Activated B cell treated with CpG ODN at 0.5 μM for 24 hours (primary cell): ENCODE measurements at regions of chr6 and their contacts with region 1.

Region 1: DNA sequence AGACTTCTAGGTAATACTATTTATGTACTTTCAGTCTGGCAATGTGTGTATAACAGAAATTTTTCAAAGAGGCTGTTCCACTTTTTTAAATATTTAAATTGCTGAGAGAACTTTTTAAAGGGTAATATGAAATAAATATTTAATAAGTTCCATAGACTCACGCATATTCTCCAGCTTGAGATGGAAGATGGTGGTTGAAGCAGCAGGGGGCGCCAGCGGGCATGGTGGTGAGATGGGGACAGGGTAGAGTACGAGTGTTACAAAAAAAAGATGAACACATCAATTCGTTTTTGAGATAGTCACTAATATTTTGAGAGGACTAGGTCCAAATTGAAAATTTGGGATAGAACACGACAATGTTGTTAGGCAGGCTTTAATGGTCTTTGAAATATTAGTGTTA is 68.4 kb downstream of the RSPO3 start:
- DNase-seq: peak; percentile 17
- ATAC-seq: no peak
- H3K4me3 Mint-ChIP-seq: no peak overlapping the region
- H3K27ac Mint-ChIP-seq: no peak overlapping the region
- H3K4me1 Mint-ChIP-seq: no peaks in the 10 kb centered on the region
- H3K27me3 Mint-ChIP-seq: peaks cover 7% of the 10 kb centered on the region
- CTCF ChIP-seq: no peak

Region 2: GRCh38 chr6:127420556-127420955 is 233.7 kb after region 1 on chr6:
- CTCF ChIA-PET with region 1: no interaction called
- POLR2A ChIA-PET with region 1: no interaction called
- intact Hi-C with region 1: loop called (anchors 2 kb)
- DNase-seq: no peak
- ATAC-seq: peak; percentile 99
- H3K4me3 Mint-ChIP-seq: peak overlapping the region; percentile 28
- H3K27ac Mint-ChIP-seq: no peak overlapping the region
- H3K4me1 Mint-ChIP-seq: peaks cover 21% of the 10 kb centered on the region
- H3K27me3 Mint-ChIP-seq: no peaks in the 10 kb centered on the region
- CTCF ChIP-seq: no peak

Region 3: DNA sequence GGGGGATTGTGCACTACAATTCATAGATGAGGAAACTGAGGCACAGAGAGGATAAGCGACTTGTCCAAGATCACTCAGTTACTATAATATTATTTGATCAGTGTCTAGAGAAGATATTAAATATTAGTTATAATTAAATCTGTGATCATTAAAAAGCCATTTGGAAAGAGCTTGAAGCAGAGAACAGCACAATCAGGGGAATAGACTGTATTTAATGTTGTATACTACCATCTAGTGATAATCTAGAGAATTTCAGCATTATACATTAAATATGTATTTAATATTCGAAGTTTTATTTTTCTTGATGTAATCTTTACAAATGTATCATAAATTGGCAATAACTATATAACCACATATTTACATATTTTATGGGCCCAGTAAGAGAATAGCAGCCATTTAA is 352.4 kb after region 1 on chr6:
- CTCF ChIA-PET with region 1: interaction called, 4 read pairs
- POLR2A ChIA-PET with region 1: no interaction called
- intact Hi-C with region 1: loop called (anchors 2 kb)
- DNase-seq: no peak
- ATAC-seq: no peak
- H3K4me3 Mint-ChIP-seq: no peak overlapping the region
- H3K27ac Mint-ChIP-seq: no peak overlapping the region
- H3K4me1 Mint-ChIP-seq: no peaks in the 10 kb centered on the region
- H3K27me3 Mint-ChIP-seq: peaks cover 8% of the 10 kb centered on the region
- CTCF ChIP-seq: no peak